Adrenal gland (tissue), 19 donors: ENCODE measurements at regions of chr19 and their contacts with region 1.

Region 1: DNA sequence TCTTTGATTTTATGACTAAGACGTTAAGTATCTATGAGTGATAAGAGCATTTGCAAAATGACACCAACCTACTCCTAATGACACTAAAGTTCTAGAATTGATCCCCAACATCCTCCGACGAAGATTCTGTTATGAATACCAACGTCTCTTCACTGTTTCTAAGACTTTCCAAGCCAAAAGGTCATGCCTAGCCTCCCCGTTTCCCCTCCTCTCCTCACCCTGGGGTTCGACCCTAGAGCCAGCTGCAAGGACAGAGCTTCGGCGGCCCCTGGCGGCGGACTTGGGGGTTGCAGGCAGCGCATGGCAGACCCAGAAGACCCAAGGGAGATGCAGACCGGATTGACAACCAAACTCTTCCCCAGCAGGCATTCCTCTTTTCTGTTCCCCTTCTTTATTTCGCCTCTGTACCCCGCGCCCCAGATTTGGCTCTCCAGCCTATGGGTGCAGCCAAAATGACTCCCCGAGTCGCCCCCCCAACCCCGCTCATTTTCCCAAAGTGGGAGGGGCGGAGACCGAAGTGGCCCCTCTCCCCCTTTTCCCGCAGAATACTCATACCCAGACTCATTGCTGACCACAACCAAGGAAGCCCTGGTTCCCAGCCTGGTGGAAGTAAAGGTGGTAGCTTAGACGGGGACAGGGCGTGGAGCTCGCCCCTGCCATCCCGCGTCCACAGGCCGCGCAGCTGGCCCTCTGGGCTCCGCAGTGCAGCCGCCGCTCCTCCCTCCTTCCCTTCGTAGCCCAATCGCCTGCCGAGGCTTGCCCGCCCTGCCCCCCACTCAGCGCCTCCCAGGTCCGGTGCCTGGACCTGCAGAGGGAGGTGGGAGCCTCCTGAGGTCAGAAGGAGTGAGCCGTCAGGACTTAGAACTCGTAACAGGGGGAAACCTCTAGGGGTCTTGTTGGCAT is 4.1 kb upstream of the EML2 start:
- DNase-seq: peak; percentile 81 to 93 (median 87)
- H3K4me3 ChIP-seq: no peak overlapping the region
- H3K27ac ChIP-seq: peak overlapping the region in 3 of 5 donors; percentile 15 to 94 (median 87)
- H3K4me1 ChIP-seq: peaks cover 23 to 40% of the 10 kb centered on the region in 2 donors
- H3K27me3 ChIP-seq: no peaks in the 10 kb centered on the region
- CTCF ChIP-seq: peak; percentile 94 to 99 (median 98)
- POLR2A ChIP-seq: no peak

Region 2: GRCh38 chr19:45523642-45524256 is 119.5 kb before region 1 on chr19:
- intact Hi-C with region 1: loop called (anchors 2 to 10 kb)
- DNase-seq: peak; percentile 80 to 93 (median 85)
- H3K4me3 ChIP-seq: no peak overlapping the region
- H3K27ac ChIP-seq: peak overlapping the region in 3 of 5 donors; percentile 17 to 66 (median 42)
- H3K4me1 ChIP-seq: peaks cover 11 to 13% of the 10 kb centered on the region in 2 donors
- H3K27me3 ChIP-seq: no peaks in the 10 kb centered on the region
- CTCF ChIP-seq: peak; percentile 87 to 96 (median 94)
- POLR2A ChIP-seq: no peak

Region 3: DNA sequence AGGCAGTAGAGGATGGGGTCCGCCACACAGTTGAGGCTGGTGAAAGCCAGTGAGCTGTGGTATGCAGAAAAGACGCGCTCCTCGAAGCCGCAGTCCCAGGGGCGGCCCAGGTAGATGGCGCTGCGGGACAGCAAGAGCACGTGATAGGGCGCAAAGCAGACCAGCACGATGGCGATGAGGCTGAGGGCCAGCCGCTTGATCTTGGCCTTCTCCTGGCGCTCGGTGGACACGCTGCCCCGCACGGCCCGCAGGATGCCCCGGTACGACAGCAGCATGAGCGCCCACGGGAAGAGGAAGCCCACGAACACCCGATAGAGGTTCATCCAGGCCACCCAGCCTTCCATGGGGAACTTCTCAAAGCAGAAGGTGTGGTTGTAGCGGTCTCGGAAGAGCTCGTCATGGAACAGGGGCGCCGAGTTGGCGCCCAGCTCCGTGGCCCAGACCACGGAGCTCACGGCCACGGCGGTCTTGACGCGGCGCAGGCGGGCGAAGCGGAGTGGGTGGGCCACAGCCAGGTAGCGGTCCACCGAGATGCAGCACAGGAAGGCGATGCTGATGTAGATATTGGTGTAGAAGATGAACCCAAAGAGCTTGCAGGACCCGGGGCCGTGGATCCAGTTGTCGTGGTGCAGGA is 52.2 kb before region 1 on chr19:
- intact Hi-C with region 1: no loop called
- DNase-seq: peak; percentile 45 to 79 (median 71)
- H3K4me3 ChIP-seq: no peak overlapping the region
- H3K27ac ChIP-seq: no peak overlapping the region
- H3K4me1 ChIP-seq: peaks cover 4% of the 10 kb centered on the region in 2 donors
- H3K27me3 ChIP-seq: peaks cover 8% of the 10 kb centered on the region
- CTCF ChIP-seq: peak; percentile 22 to 53 (median 41)
- POLR2A ChIP-seq: no peak

Region 4: GRCh38 chr19:45601524-45602374 is 41.5 kb before region 1 on chr19 and contains the start of gene GPR4:
- intact Hi-C with region 1: loop called (anchors 2 to 5 kb)
- DNase-seq: peak in 1 of 7 donors; percentile 37
- H3K4me3 ChIP-seq: peak within 1 kb of the TSS in 2 of 4 donors; percentile 13 to 43
- H3K27ac ChIP-seq: peak within 1 kb of the TSS in 3 of 5 donors; percentile 26 to 76 (median 35)
- H3K4me1 ChIP-seq: peaks cover 0 to 17% of the 10 kb centered on the region in 2 donors
- H3K27me3 ChIP-seq: peaks cover 11% of the 10 kb centered on the region
- CTCF ChIP-seq: no peak
- POLR2A ChIP-seq: no peak
- total RNA-seq, gene GPR4: 0.55 to 7.8 (median 3.5) TPM

Region 5: DNA sequence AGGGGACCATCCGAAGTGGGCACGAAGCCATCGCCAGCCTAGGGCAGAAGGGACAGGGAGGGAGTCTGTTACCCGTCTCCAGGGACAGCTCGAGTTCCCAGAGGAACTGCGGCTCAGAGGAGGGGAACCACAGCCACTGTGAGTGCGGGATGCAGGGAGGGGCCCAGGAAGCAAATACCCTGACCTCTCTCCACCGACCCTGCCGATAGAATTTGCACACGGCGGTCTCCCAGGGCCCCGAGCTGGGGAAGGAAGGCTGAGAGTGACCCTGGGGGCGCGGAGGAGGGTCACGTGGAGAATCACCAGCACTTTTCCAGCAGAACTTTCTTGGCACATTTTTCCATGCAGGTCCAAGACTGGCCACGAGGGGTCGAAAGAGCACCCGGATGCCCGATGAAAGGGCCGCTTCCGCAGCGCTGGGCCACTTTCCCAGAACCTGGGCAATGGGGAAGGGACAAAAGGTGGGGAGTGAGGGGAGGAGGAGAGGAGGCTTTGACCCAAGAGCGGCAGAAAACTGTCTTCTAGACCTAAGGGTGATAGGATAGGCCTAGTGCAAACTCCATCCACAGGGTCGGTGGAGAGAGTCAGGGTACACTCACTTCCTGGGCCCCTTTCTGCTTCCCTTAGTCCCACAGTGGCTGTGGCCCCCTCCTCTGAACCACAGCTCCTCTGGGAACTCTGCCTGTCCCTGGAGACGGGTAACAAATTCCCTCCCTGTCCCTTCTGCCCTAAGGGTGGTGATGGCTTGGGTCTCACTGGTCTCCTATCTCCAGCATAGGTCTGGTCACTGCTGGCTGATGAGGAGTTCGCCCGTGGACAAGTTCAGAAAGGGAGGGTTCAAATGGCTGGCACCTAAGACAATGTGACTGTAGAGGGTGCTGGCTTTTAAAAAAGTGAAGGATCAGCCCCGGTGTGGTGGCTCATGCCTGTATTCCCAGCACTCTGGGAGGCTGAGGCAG is 35.9 kb before region 1 on chr19:
- intact Hi-C with region 1: loop called (anchors 2 to 5 kb)
- DNase-seq: peak; percentile 82 to 92 (median 85)
- H3K4me3 ChIP-seq: peak overlapping the region in 1 of 4 donors; percentile 49
- H3K27ac ChIP-seq: peak overlapping the region in 2 of 5 donors; percentile 24 to 72
- H3K4me1 ChIP-seq: peaks cover 3 to 5% of the 10 kb centered on the region in 2 donors
- H3K27me3 ChIP-seq: no peaks in the 10 kb centered on the region
- CTCF ChIP-seq: peak; percentile 88 to 95 (median 93)
- POLR2A ChIP-seq: no peak

Region 6: DNA sequence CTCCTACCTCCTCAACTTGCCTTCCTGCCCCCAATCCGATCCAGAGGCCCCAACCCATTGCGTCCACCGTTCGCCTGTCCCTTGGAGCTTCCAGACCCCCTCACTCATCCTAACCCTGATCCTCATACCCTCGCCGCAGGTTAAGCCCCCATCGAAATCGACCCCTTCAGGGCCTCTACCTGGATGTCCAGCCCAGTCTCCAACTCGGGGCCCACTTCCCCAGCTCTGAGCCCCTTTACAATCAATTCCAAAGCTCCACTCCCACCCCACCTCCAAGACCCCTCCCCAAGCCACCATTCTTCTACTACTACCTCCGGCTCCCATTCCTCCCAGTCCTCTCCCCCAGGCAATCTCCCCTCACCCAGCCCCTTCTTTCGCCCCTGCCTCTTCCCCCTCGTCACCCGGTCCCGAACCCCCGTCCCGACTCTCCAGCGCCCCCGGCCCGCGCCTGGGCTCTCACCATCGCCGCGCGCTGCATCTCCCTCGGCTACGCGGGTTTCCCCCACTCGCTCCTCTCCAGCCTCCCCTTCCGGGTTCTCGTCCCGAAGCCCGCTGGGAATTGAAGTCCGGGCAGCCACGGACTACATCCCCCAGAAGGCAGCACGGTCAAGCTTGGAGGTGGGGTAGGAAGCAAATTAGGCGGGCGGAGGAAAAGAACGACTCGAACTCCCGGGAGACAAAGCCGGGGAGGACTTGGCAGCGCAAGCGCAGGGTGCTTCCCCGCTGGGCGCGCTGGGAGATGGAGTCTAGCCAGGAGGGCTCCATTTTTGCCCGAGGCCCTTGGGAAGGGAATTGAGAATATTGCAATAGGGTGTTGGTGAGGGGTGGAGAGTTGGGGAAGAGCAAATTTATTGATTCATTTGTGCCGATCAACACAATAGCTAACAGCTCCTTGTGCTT is 87.4 kb after region 1 on chr19 and contains the start of gene FBXO46:
- intact Hi-C with region 1: no loop called
- DNase-seq: peak; percentile 95 to 99 (median 98)
- H3K4me3 ChIP-seq: peak within 1 kb of the TSS in 3 of 4 donors; percentile 58 to 92 (median 76)
- H3K27ac ChIP-seq: peak within 1 kb of the TSS in 3 of 5 donors; percentile 44 to 69 (median 50)
- H3K4me1 ChIP-seq: peaks cover 4 to 22% of the 10 kb centered on the region in 2 donors
- H3K27me3 ChIP-seq: no peaks in the 10 kb centered on the region
- CTCF ChIP-seq: no peak
- POLR2A ChIP-seq: peak in 1 of 2 donors; percentile 72
- total RNA-seq, gene FBXO46: 5.2 to 25.6 (median 11.6) TPM